Mucosa of descending colon (tissue), 3 donors: ENCODE measurements at regions of chr9 and their contacts with region 1.

Region 1: DNA sequence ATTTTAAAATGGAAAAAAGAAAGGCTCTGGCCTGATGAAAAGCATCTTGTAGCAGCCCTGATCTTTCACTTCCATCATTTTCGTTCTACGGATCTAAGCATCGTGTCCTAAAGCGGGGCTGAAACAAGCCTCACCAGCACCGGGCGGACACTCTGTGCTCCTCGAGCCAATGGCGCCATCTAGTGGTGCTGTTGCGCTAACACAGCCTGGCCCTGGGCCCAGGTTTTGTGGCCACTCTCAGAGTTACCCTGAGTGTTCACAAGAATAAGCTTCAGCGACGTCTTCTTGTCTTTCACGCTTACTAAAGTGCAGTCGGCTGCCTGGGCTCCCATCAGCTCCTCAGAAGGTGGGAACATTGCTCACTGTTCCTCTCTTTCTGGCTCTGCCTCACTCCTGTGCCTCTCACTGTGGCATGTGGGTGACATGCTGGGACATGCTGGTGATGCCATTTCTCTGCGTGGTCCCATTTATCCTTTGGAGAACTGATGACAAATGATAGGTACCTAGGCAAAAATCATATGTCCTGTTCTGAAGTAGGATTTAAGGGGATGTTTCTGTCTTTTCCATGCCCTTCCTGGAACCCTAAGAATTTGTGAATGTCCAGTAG is 32.7 kb downstream of the DMRT3 start:
- DNase-seq: peak; percentile 80 to 92 (median 89)
- ATAC-seq: peak; percentile 99
- H3K4me3 ChIP-seq: no peak overlapping the region
- H3K4me1 ChIP-seq: no peaks in the 10 kb centered on the region
- CTCF ChIP-seq: peak; percentile 97

Region 2: DNA sequence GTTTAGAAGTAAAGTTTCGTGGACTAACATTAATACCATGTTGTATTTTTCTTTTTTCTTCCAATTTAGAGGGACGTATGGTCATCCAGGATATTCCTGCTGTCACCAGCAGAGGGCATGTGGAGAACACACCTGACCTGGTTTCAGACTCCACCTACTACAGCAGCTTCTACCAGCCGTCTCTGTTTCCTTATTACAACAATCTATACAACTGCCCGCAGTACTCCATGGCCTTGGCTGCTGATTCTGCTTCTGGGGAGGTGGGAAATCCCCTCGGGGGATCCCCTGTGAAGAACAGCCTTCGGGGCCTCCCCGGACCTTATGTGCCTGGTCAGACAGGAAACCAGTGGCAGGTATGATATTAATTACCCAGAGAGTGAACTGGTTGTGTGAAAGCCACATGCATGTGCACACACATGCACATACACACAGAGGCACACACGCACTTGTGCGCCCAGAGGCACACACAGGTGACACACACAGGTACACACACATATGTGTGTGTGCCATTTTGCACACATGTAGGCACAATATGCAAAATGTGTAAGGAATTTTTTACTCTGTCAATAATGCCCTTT is 115.3 kb before region 1 on chr9:
- intact Hi-C with region 1: loop called (anchors 5 kb)
- DNase-seq: peak; percentile 50 to 82 (median 57)
- ATAC-seq: peak; percentile 100
- H3K4me3 ChIP-seq: no peak overlapping the region
- H3K4me1 ChIP-seq: no peaks in the 10 kb centered on the region
- CTCF ChIP-seq: peak; percentile 70

Region 3: GRCh38 chr9:1156801-1157550 is 147.8 kb after region 1 on chr9:
- intact Hi-C with region 1: no loop called
- DNase-seq: no peak
- ATAC-seq: no peak
- H3K4me3 ChIP-seq: no peak overlapping the region
- H3K4me1 ChIP-seq: no peaks in the 10 kb centered on the region
- CTCF ChIP-seq: no peak